CD14-positive monocyte (primary cell): ENCODE measurements at regions of chr19 and their contacts with region 1.

Region 1: GRCh38 chr19:42450314-42450934 is 7.7 kb upstream of the CXCL17 start:
- DNase-seq: peak; percentile 69 to 83 (median 83)
- H3K4me3 ChIP-seq: no peak overlapping the region
- H3K4me3 Mint-ChIP-seq: no peak overlapping the region
- H3K27ac ChIP-seq: no peak overlapping the region
- H3K27ac Mint-ChIP-seq: no peak overlapping the region
- H3K4me1 ChIP-seq: peaks cover 14 to 26% of the 10 kb centered on the region in 2 donors
- H3K4me1 Mint-ChIP-seq: peaks cover 29% of the 10 kb centered on the region
- H3K27me3 ChIP-seq: no peaks in the 10 kb centered on the region
- H3K27me3 Mint-ChIP-seq: peaks cover 1 to 19% (median 4%) of the 10 kb centered on the region in 3 donors
- CTCF ChIP-seq: peak; percentile 88

Region 2: GRCh38 chr19:42529248-42529764 is 78.9 kb after region 1 on chr19:
- intact Hi-C with region 1: loop called (anchors 1 to 2 kb)
- DNase-seq: peak; percentile 47 to 61 (median 53)
- H3K4me3 ChIP-seq: no peak overlapping the region
- H3K4me3 Mint-ChIP-seq: no peak overlapping the region
- H3K27ac ChIP-seq: no peak overlapping the region
- H3K27ac Mint-ChIP-seq: peak overlapping the region in 1 of 7 donors; percentile 32
- H3K4me1 ChIP-seq: peaks cover 13 to 16% of the 10 kb centered on the region in 2 donors
- H3K4me1 Mint-ChIP-seq: peaks cover 16% of the 10 kb centered on the region
- H3K27me3 ChIP-seq: no peaks in the 10 kb centered on the region
- H3K27me3 Mint-ChIP-seq: peaks cover 3 to 16% (median 13%) of the 10 kb centered on the region in 3 donors
- CTCF ChIP-seq: peak; percentile 98

Region 3: GRCh38 chr19:42596391-42597072 is 146.1 kb after region 1 on chr19:
- intact Hi-C with region 1: loop called (anchors 2 to 5 kb)
- DNase-seq: peak; percentile 21 to 50 (median 43)
- H3K4me3 ChIP-seq: no peak overlapping the region
- H3K4me3 Mint-ChIP-seq: no peak overlapping the region
- H3K27ac ChIP-seq: no peak overlapping the region
- H3K27ac Mint-ChIP-seq: no peak overlapping the region
- H3K4me1 ChIP-seq: no peaks in the 10 kb centered on the region
- H3K4me1 Mint-ChIP-seq: peaks cover 29% of the 10 kb centered on the region
- H3K27me3 ChIP-seq: peaks cover 0 to 3% of the 10 kb centered on the region in 2 donors
- H3K27me3 Mint-ChIP-seq: peaks cover 2 to 23% (median 17%) of the 10 kb centered on the region in 3 donors
- CTCF ChIP-seq: peak; percentile 100